ENCODE measurements at regions of chr7 and their contacts with region 1.

Region 1: DNA sequence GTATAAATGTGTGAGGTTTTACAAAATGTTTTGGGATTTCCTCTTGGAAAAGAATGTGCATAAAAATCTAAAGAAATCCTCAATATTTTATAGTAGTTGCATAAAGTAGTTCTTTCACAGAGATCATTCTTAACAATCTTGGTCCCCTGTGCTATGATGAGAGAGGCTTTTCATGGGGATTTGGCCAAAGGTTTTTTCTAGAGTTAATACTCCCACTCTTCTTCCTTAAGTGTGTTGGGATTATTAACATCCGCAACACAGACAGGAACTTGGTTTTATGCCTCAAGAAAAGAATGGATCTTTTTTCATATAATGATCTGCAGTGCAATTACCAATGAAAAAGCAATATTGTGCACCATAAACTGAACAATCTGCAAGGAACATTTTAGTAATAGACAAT is 71.5 kb downstream of the AGMO start:
- DNase-seq: no peak
- ATAC-seq: no peak
- H3K4me3 ChIP-seq: no peak overlapping the region
- H3K27ac ChIP-seq: no peak overlapping the region
- H3K4me1 ChIP-seq: no peaks in the 10 kb centered on the region
- H3K27me3 ChIP-seq: no peaks in the 10 kb centered on the region
- CTCF ChIP-seq: no peak
- POLR2A ChIP-seq: no peak
- RAD21 ChIP-seq: no peak

Region 2: GRCh38 chr7:15143932-15144331 is 346.4 kb before region 1 on chr7:
- CTCF ChIA-PET with region 1: no interaction called
- POLR2A ChIA-PET with region 1: no interaction called
- RAD21 ChIA-PET with region 1: no interaction called
- intact Hi-C with region 1: no loop called
- DNase-seq: no peak
- ATAC-seq: no peak
- H3K4me3 ChIP-seq: no peak overlapping the region
- H3K27ac ChIP-seq: no peak overlapping the region
- H3K4me1 ChIP-seq: no peaks in the 10 kb centered on the region
- H3K27me3 ChIP-seq: no peaks in the 10 kb centered on the region
- CTCF ChIP-seq: no peak
- POLR2A ChIP-seq: no peak
- RAD21 ChIP-seq: no peak

Region 3: GRCh38 chr7:15430911-15431310 is 59.4 kb before region 1 on chr7:
- CTCF ChIA-PET with region 1: no interaction called
- POLR2A ChIA-PET with region 1: no interaction called
- RAD21 ChIA-PET with region 1: no interaction called
- intact Hi-C with region 1: loop called (anchors 2 kb)
- DNase-seq: no peak
- ATAC-seq: no peak
- H3K4me3 ChIP-seq: no peak overlapping the region
- H3K27ac ChIP-seq: no peak overlapping the region
- H3K4me1 ChIP-seq: no peaks in the 10 kb centered on the region
- H3K27me3 ChIP-seq: no peaks in the 10 kb centered on the region
- CTCF ChIP-seq: no peak
- POLR2A ChIP-seq: no peak
- RAD21 ChIP-seq: no peak

Region 4: GRCh38 chr7:15515252-15515651 is 25.0 kb after region 1 on chr7:
- CTCF ChIA-PET with region 1: no interaction called
- POLR2A ChIA-PET with region 1: no interaction called
- RAD21 ChIA-PET with region 1: no interaction called
- intact Hi-C with region 1: no loop called
- DNase-seq: no peak
- ATAC-seq: no peak
- H3K4me3 ChIP-seq: no peak overlapping the region
- H3K27ac ChIP-seq: no peak overlapping the region
- H3K4me1 ChIP-seq: no peaks in the 10 kb centered on the region
- H3K27me3 ChIP-seq: no peaks in the 10 kb centered on the region
- CTCF ChIP-seq: no peak
- POLR2A ChIP-seq: no peak
- RAD21 ChIP-seq: no peak